B cell (primary cell): ENCODE measurements at regions of chr13 and their contacts with region 1.

Region 1: GRCh38 chr13:45367358-45367757 is 26.4 kb upstream of the TPT1 start:
- DNase-seq: peak; percentile 81
- ATAC-seq: peak; percentile 99
- H3K4me3 ChIP-seq: peak overlapping the region in 1 of 5 experiments; percentile 1
- H3K4me3 Mint-ChIP-seq: peak overlapping the region; percentile 59
- H3K27ac ChIP-seq: peak overlapping the region in 1 of 2 donors; percentile 39
- H3K27ac Mint-ChIP-seq: peak overlapping the region; percentile 83
- H3K4me1 ChIP-seq: peaks cover 13 to 24% of the 10 kb centered on the region in 2 donors
- H3K4me1 Mint-ChIP-seq: peaks cover 32% of the 10 kb centered on the region
- H3K27me3 ChIP-seq: no peaks in the 10 kb centered on the region
- H3K27me3 Mint-ChIP-seq: no peaks in the 10 kb centered on the region
- CTCF ChIP-seq: no peak

Region 2: DNA sequence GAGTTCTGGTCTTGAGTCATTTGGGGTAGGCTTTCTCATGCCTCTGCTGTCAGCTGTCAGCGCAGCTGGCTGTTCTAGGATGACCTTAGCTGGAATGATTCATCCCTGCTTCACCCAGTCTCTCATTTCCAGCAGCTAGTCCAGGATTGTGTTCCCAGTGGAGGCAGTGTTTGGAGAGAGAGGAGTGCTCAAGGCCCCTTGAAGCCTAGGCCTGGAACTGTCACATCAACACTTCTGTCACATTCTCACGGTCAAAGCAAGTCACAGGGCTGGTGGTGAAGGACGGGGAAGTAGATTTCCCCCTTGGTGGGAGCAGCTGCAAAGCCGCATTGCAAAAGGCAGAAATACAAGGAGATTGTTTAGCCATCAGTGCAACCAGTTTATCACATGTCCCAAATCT is 41.6 kb before region 1 on chr13:
- CTCF ChIA-PET with region 1: no interaction called
- POLR2A ChIA-PET with region 1: no interaction called
- intact Hi-C with region 1: no loop called
- DNase-seq: no peak
- ATAC-seq: no peak
- H3K4me3 ChIP-seq: no peak overlapping the region
- H3K4me3 Mint-ChIP-seq: no peak overlapping the region
- H3K27ac ChIP-seq: no peak overlapping the region
- H3K27ac Mint-ChIP-seq: no peak overlapping the region
- H3K4me1 ChIP-seq: peaks cover 13 to 15% of the 10 kb centered on the region in 2 donors
- H3K4me1 Mint-ChIP-seq: peaks cover 18% of the 10 kb centered on the region
- H3K27me3 ChIP-seq: no peaks in the 10 kb centered on the region
- H3K27me3 Mint-ChIP-seq: no peaks in the 10 kb centered on the region
- CTCF ChIP-seq: no peak

Region 3: GRCh38 chr13:45384474-45385174 is 17.3 kb after region 1 on chr13:
- CTCF ChIA-PET with region 1: interaction called, 11 read pairs
- POLR2A ChIA-PET with region 1: no interaction called
- intact Hi-C with region 1: no loop called
- DNase-seq: no peak
- ATAC-seq: no peak
- H3K4me3 ChIP-seq: no peak overlapping the region
- H3K4me3 Mint-ChIP-seq: no peak overlapping the region
- H3K27ac ChIP-seq: no peak overlapping the region
- H3K27ac Mint-ChIP-seq: no peak overlapping the region
- H3K4me1 ChIP-seq: no peaks in the 10 kb centered on the region
- H3K4me1 Mint-ChIP-seq: no peaks in the 10 kb centered on the region
- H3K27me3 ChIP-seq: no peaks in the 10 kb centered on the region
- H3K27me3 Mint-ChIP-seq: no peaks in the 10 kb centered on the region
- CTCF ChIP-seq: no peak

Region 4: DNA sequence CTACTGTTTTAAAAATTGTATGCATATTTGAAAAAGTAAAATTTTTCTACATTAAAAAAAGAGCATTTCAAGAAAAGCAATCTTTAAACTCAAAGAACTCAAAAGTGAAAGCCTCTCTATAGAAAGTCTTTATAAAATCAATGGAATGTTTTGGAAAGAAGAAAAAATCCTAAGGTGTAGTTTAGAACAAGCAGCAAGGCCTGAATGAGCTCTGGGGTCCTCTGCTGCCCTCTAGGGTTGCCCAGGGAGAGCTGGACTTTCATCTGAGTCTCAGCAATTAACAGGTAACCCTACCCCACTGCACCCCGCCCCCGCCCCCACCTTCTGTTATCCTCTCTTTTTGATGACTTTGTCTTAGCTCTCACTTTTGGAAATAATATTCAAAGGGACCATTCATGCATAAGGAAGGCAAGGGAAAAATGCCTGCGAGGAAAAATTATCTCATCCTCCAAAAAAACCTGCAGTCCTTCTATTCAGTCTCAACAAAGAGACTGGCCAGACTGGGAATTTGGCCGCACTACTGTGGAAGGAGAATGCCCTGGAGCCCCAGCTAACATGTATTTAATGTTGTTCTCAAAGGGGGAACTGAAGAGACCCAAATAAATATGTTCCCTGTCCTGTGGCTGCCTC is 26.7 kb after region 1 on chr13:
- CTCF ChIA-PET with region 1: interaction called, 40 read pairs
- POLR2A ChIA-PET with region 1: no interaction called
- intact Hi-C with region 1: no loop called
- DNase-seq: peak; percentile 49
- ATAC-seq: peak; percentile 47
- H3K4me3 ChIP-seq: no peak overlapping the region
- H3K4me3 Mint-ChIP-seq: no peak overlapping the region
- H3K27ac ChIP-seq: no peak overlapping the region
- H3K27ac Mint-ChIP-seq: no peak overlapping the region
- H3K4me1 ChIP-seq: no peaks in the 10 kb centered on the region
- H3K4me1 Mint-ChIP-seq: peaks cover 6% of the 10 kb centered on the region
- H3K27me3 ChIP-seq: no peaks in the 10 kb centered on the region
- H3K27me3 Mint-ChIP-seq: no peaks in the 10 kb centered on the region
- CTCF ChIP-seq: peak; percentile 63

Region 5: DNA sequence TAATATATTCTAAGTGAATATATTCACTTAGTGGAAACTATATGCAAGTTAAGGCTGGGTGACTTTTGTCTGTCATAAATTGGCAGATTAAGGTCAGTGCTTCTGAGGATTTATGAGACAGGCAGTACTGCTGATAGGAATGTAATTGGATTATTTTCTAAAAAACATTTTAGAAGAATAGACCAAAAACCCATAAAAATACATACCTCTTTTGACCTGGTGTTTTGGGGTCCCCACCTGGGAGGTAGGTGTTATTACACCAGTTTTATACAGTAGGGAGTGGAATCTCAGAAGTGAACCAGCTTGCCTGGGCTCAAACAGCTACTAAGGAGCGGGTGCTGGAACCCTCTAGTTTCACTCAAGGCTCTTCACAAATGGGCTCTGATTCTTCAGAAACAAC is 122.7 kb after region 1 on chr13:
- CTCF ChIA-PET with region 1: interaction called, 17 read pairs
- POLR2A ChIA-PET with region 1: no interaction called
- intact Hi-C with region 1: loop called (anchors 5 kb)
- DNase-seq: peak; percentile 35
- ATAC-seq: no peak
- H3K4me3 ChIP-seq: no peak overlapping the region
- H3K4me3 Mint-ChIP-seq: no peak overlapping the region
- H3K27ac ChIP-seq: no peak overlapping the region
- H3K27ac Mint-ChIP-seq: no peak overlapping the region
- H3K4me1 ChIP-seq: no peaks in the 10 kb centered on the region
- H3K4me1 Mint-ChIP-seq: no peaks in the 10 kb centered on the region
- H3K27me3 ChIP-seq: no peaks in the 10 kb centered on the region
- H3K27me3 Mint-ChIP-seq: no peaks in the 10 kb centered on the region
- CTCF ChIP-seq: peak; percentile 57

Region 6: DNA sequence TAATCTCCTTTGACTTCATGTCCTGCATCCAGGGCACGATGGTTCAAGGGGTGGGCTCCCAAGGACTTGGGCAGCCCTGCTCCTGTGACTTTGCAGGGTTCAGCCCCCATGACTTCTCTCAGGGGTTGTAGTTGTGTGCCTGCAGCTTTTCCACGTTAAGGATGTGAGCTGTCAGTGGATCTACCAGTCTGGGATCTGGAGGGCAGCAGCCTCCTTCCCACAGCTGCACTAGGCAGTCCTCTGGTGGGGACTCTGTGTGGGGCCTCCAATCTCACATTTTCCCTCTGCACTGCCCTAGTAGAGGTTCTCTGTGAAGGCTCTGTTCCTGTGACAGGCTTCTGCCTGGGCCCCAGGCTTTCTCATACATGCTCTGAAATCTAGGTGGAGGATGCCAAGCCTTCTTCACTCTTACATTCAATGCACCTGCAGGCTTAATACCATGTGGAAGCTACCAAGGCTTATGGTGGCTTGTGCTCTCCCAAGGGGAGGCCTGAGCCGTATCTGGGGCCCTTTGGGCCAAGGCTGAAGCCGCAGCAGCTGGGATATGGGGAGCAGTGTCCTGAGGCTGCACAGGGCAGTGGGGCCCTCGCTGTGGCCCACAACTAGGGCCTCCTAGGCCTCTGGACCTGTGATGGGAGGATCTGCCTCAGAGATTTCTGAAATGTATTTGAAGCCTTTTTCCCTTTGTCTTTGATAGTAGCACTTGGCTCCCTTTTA is 287.4 kb after region 1 on chr13:
- CTCF ChIA-PET with region 1: no interaction called
- POLR2A ChIA-PET with region 1: no interaction called
- intact Hi-C with region 1: no loop called
- DNase-seq: no peak
- ATAC-seq: no peak
- H3K4me3 ChIP-seq: no peak overlapping the region
- H3K4me3 Mint-ChIP-seq: no peak overlapping the region
- H3K27ac ChIP-seq: no peak overlapping the region
- H3K27ac Mint-ChIP-seq: no peak overlapping the region
- H3K4me1 ChIP-seq: no peaks in the 10 kb centered on the region
- H3K4me1 Mint-ChIP-seq: no peaks in the 10 kb centered on the region
- H3K27me3 ChIP-seq: peaks cover 0 to 3% (median 0%) of the 10 kb centered on the region in 4 experiments
- H3K27me3 Mint-ChIP-seq: peaks cover 7% of the 10 kb centered on the region
- CTCF ChIP-seq: no peak